ENCODE measurements at regions of chr7 and their contacts with region 1.

Region 1: DNA sequence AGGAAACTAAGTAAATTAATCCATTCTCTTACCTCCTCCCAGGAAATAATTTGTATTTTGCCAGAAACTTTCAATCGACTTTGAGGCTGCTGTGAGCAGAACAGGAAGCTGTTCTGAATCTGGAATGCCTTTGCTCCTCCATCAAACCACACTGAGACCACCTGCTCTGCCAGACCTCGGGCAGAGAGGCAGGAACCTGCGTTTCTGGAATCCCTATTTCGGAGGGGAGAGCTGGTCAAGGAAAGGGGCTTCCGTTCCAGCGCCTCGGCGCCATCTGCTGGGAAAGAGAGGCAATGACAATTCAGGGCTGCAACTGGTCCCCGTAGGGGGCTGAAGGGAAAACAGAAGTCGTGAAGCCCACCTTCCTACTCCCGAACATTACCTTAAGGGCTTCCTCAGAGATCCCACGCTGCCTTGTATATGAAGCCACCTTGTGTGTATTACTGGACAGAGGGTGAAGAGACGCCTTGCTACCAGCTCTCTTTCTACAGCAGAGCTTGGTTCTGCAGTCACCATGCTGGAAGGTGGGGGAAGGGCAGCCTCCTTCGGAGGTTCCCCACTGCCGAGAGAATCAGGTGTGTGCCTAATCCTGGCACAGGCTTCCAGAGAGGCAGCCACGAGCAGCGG is 31.2 kb downstream of the ZNF467 start:
- DNase-seq: peak; percentile 75 to 88
- ATAC-seq: peak; percentile 85
- H3K4me3 ChIP-seq: peak overlapping the region in 1 of 2 donors; percentile 36
- H3K27ac ChIP-seq: no peak overlapping the region
- H3K4me1 ChIP-seq: no peaks in the 10 kb centered on the region
- H3K27me3 ChIP-seq: no peaks in the 10 kb centered on the region

Region 2: GRCh38 chr7:149662591-149663095 is 79.5 kb before region 1 on chr7:
- intact Hi-C with region 1: loop called in 1 of 2 experiments (anchors 10 kb)
- DNase-seq: peak in 1 of 2 donors; percentile 68
- ATAC-seq: no peak
- H3K4me3 ChIP-seq: no peak overlapping the region
- H3K27ac ChIP-seq: no peak overlapping the region
- H3K4me1 ChIP-seq: no peaks in the 10 kb centered on the region
- H3K27me3 ChIP-seq: no peaks in the 10 kb centered on the region

Region 3: GRCh38 chr7:149670288-149670687 is 71.9 kb before region 1 on chr7:
- intact Hi-C with region 1: loop called (anchors 5 to 10 kb)
- DNase-seq: no peak
- ATAC-seq: no peak
- H3K4me3 ChIP-seq: peak overlapping the region in 1 of 2 donors; percentile 26
- H3K27ac ChIP-seq: no peak overlapping the region
- H3K4me1 ChIP-seq: no peaks in the 10 kb centered on the region
- H3K27me3 ChIP-seq: no peaks in the 10 kb centered on the region

Region 4: DNA sequence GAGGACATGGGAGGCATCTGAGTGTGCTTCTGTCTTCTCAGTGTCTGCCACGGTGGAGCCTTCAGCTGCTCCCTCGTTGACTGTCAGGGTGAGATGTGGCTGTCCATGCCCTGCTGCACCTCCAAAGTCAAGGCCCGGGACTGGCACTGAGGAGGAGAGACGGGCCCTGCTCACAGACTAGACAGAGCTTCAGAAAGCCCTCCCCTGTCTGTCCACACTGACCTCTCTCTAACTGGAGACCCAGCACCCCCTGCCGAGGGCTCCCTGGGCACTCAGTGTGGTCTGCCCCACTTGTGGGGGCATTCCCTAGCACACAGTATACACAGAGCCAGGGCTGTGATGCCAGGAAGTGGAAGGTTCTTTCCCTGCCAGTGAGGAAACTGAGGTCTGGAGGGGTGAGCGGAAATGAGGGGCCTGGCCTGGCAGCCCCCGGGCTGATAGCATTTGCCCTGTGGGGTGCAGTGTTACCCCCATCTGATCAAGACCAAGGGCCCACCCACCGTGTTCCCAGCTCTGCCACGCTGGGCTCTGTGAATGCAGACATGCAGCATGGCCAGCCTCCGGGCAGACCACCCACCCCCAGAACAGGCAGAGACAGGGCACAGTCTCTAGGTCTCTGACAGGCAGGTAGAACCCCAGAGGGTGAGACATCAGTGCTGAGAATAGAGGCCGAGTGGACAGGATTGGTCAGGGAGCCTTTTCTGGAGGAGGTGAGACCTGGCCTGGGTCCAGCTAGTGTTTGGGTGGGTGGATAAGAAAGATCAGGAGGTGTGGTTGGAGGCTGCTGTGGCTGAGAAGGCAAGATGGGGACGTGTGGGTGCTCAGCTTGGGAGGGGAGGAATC is 84.9 kb after region 1 on chr7:
- intact Hi-C with region 1: no loop called
- DNase-seq: peak; percentile 27 to 55
- ATAC-seq: no peak
- H3K4me3 ChIP-seq: no peak overlapping the region
- H3K27ac ChIP-seq: no peak overlapping the region
- H3K4me1 ChIP-seq: no peaks in the 10 kb centered on the region
- H3K27me3 ChIP-seq: no peaks in the 10 kb centered on the region

Measured in aorta (tissue), 5 donors.